WTC11 (cell line): ENCODE measurements at regions of chr1 and their contacts with region 1.

Region 1: DNA sequence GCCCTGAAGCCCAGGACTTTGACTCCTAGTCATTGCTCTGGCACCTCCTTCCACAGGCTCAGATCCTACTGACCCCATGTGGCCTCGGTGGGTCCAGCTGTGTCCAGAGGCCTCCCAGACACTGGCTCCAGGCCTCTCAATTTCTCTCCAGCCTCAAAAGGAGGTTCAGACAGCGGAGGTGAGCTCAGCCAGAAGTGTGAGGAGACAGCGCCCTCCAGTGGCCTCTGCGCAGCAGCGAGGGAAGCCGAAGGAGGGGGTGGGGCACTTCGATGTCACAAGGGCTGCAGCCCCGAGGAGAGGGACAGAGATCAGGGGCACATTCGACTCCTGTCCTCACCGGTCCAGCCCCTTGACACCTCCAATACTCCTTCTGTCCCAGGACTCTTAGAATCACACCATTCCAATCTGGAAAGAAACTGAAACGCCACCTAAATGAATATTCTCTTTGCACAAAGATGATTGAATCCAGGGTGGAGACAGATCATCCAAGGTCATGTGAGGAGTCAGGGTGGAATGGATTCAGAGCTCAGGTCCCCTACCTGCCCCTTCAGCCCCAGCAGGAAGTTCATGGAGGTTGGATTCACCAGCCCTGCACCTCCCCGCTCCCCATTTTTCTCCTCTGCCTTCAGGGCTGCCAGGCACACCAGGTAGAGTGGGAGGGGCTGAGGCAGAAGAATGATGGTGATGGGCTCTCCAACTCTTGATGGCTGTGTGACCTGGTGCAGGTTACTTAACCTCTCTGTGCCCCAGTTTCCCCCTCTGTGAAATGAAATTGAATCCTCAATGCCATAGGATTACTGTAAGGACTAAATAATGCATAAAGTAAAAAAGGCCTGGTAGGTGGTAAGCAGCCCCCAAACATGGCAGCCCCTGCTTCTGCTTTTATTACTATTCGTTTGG is 34.8 kb upstream of the ZBTB40 start:
- DNase-seq: peak; percentile 90
- ATAC-seq: peak; percentile 61
- H3K4me3 Mint-ChIP-seq: peak overlapping the region; percentile 42
- H3K27ac Mint-ChIP-seq: no peak overlapping the region
- H3K4me1 Mint-ChIP-seq: peaks cover 19% of the 10 kb centered on the region
- H3K27me3 Mint-ChIP-seq: no peaks in the 10 kb centered on the region
- CTCF ChIP-seq: peak; percentile 97

Region 2: GRCh38 chr1:22131875-22132486 is 284.8 kb before region 1 on chr1:
- CTCF ChIA-PET with region 1: interaction called, 25 read pairs
- POLR2A ChIA-PET with region 1: no interaction called
- DNase-seq: peak; percentile 85
- ATAC-seq: peak; percentile 83
- H3K4me3 Mint-ChIP-seq: no peak overlapping the region
- H3K27ac Mint-ChIP-seq: no peak overlapping the region
- H3K4me1 Mint-ChIP-seq: peaks cover 14% of the 10 kb centered on the region
- H3K27me3 Mint-ChIP-seq: no peaks in the 10 kb centered on the region
- CTCF ChIP-seq: peak; percentile 94

Region 3: DNA sequence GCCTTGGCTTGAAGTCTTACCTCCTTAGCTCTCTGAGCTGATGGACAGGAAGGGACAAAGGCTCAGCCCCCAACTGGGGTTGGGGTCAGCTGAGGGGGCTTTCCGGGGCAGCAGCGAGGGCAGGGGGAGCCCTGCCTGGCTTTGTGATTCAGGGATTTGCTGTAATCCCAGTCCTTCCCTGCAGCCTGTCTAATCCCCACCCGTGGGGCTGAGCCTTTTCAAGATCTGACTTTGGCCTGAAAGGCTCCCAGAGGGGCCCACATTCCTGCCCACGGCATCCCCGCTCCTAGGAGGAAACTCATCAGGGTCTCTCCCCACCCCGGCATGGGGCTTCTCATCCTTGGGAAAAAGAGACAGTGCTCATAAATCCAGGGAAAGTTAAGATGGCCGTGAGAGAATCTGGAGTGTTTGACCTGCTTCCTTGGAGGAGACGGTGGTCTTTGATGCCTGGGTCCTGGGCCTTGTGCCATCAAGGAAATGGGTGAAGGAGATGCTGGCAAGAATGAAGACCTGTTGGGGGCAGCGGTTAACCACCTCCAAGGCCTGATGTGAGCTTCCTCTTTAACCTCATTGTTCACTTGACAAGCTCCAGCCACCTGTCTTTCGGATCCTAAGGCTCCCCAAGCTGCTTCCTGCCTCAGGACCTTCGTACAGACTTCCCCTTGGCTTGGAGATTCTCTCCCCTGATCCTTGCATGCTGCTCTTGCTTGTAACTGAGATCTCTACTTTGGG is 190.8 kb before region 1 on chr1:
- CTCF ChIA-PET with region 1: interaction called, 25 read pairs
- POLR2A ChIA-PET with region 1: no interaction called
- DNase-seq: peak; percentile 33
- ATAC-seq: peak; percentile 76
- H3K4me3 Mint-ChIP-seq: no peak overlapping the region
- H3K27ac Mint-ChIP-seq: no peak overlapping the region; the same call in 1 of the 2 replicates
- H3K4me1 Mint-ChIP-seq: peaks cover 8% of the 10 kb centered on the region
- H3K27me3 Mint-ChIP-seq: no peaks in the 10 kb centered on the region
- CTCF ChIP-seq: no peak

Region 4: GRCh38 chr1:22317226-22317919 is 99.4 kb before region 1 on chr1:
- CTCF ChIA-PET with region 1: interaction called, 11 read pairs
- POLR2A ChIA-PET with region 1: no interaction called
- DNase-seq: peak; percentile 76
- ATAC-seq: peak; percentile 74
- H3K4me3 Mint-ChIP-seq: no peak overlapping the region
- H3K27ac Mint-ChIP-seq: no peak overlapping the region
- H3K4me1 Mint-ChIP-seq: peaks cover 41% of the 10 kb centered on the region
- H3K27me3 Mint-ChIP-seq: peaks cover 16% of the 10 kb centered on the region
- CTCF ChIP-seq: peak; percentile 81

Region 5: GRCh38 chr1:22527555-22528296 is 110.9 kb after region 1 on chr1:
- CTCF ChIA-PET with region 1: interaction called, 11 read pairs
- POLR2A ChIA-PET with region 1: no interaction called
- DNase-seq: no peak
- ATAC-seq: peak; percentile 38; the same call in 1 of the 2 replicates
- H3K4me3 Mint-ChIP-seq: no peak overlapping the region
- H3K27ac Mint-ChIP-seq: no peak overlapping the region; the same call in 1 of the 2 replicates
- H3K4me1 Mint-ChIP-seq: no peaks in the 10 kb centered on the region
- H3K27me3 Mint-ChIP-seq: no peaks in the 10 kb centered on the region
- CTCF ChIP-seq: no peak